AG04450 (cell line): ENCODE measurements at regions of chr1 and their contacts with region 1.

Region 1: GRCh38 chr1:208132287-208132883 is 111.8 kb downstream of the PLXNA2 start:
- DNase-seq: no peak
- H3K4me3 ChIP-seq: no peak overlapping the region
- H3K27ac ChIP-seq: no peak overlapping the region
- H3K27me3 ChIP-seq: peaks cover 2% of the 10 kb centered on the region
- CTCF ChIP-seq: peak; percentile 73

Region 2: DNA sequence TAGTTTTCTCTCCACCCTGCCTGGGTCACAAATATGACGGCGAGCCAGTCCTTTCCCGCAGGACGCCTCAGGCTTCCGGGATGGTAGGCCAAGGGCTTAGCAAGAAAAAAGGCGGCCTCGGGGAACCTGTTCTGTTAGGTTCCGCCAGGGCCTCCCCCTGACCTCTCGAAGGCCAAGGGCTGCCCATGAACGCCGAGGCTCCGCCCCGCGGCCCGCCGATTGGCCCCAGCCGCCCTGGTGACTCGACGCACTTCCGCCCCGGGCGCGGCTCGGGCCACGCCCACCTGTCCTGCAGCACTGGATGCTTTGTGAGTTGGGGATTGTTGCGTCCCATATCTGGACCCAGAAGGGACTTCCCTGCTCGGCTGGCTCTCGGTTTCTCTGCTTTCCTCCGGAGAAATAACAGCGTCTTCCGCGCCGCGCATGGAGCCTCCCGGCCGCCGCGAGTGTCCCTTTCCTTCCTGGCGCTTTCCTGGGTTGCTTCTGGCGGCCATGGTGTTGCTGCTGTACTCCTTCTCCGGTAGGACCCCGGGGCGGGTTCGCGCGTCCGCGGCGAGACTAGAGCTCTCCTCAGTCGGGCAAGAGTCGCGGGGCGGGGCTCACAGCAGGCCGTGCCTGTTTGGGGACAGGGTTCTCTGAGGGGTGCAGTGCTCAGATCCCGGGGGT is 380.5 kb before region 1 on chr1 and contains the start of gene CD46:
- CTCF ChIA-PET with region 1: no interaction called
- POLR2A ChIA-PET with region 1: no interaction called
- DNase-seq: peak; percentile 61
- H3K4me3 ChIP-seq: peak within 1 kb of the TSS; percentile 96
- H3K27ac ChIP-seq: peak within 1 kb of the TSS; percentile 61
- H3K27me3 ChIP-seq: no peaks in the 10 kb centered on the region
- CTCF ChIP-seq: no peak
- polyA plus RNA-seq, gene CD46: 112 and 148 TPM in 2 replicates

Region 3: DNA sequence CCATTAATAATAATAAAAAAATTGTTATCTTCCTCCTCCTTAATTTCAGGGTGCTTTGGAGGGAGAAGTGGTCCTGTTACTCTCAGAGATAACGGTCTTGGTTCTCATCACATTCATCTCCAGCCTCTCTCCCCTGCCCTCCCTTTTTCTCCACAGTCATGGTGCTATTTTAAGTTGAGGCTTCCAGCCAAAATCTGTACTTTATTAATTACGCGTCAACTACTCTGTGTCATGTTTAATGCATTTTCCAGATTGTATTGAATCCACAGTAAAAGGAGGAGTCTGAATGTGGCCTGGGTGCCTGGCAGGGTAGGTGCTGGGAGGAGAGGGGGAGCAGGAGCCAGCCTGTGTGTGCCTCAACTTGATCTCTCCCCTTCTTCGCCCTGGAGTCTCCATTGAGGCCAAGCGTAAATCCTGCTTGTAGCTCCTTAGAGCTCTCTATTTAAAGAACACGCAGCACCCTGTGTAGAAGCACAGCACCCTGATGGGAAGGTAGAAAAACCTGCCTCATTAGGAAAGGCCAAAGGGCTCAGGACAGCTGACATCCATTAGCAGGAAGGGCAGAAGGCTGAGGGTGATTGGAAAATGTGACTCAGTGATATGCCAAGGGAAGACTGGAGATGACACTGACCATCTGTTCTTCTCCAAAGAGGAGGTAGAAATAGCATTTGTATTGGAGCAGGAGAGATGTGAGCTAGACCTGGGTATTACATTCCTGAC is 29.4 kb after region 1 on chr1:
- CTCF ChIA-PET with region 1: interaction called, 11 read pairs
- POLR2A ChIA-PET with region 1: no interaction called
- DNase-seq: no peak
- H3K4me3 ChIP-seq: no peak overlapping the region
- H3K27ac ChIP-seq: no peak overlapping the region
- H3K27me3 ChIP-seq: no peaks in the 10 kb centered on the region
- CTCF ChIP-seq: no peak

Region 4: DNA sequence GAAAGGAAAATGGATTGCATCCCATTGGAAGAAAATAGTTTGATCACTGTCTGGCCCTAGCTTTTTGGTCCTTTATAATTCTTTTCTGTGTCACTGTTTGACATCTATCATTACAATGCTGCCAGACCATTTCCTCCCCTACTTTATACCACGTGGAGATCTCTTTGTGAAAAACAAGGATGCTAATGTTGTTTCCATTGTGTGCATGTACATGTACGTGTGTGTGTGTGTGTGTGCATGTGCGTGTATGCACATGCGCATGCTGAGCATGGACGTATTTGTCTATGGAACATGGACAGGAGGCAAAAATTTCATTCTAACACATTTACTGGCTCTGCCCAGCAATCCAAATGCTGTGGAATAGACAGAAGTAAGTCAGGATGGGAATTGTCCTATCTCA is 264.9 kb after region 1 on chr1:
- CTCF ChIA-PET with region 1: no interaction called
- POLR2A ChIA-PET with region 1: no interaction called
- DNase-seq: no peak
- H3K4me3 ChIP-seq: no peak overlapping the region
- H3K27ac ChIP-seq: no peak overlapping the region
- H3K27me3 ChIP-seq: peaks cover 2% of the 10 kb centered on the region
- CTCF ChIP-seq: no peak